K562 (cell line): ENCODE measurements at regions of chr17 and their contacts with region 1.

Region 1: GRCh38 chr17:42536048-42536371 is at the start of gene NAGLU:
- DNase-seq: peak; percentile 97 to 100 (median 99)
- ATAC-seq: peak; percentile 89
- H3K4me3 ChIP-seq: peak within 1 kb of the TSS; percentile 64
- H3K27ac ChIP-seq: peak within 1 kb of the TSS; percentile 80
- H3K4me1 ChIP-seq: peaks cover 23 to 59% of the 10 kb centered on the region in 2 experiments
- H3K27me3 ChIP-seq: no peaks in the 10 kb centered on the region
- CTCF ChIP-seq: no peak
- EP300 ChIP-seq: peak; percentile 42; the same call in 1 of the 2 replicates
- POLR2A ChIP-seq: peak; percentile 78
- RAD21 ChIP-seq: no peak
- polyA plus RNA-seq, gene NAGLU: 0.04 to 0.21 TPM

Region 2: DNA sequence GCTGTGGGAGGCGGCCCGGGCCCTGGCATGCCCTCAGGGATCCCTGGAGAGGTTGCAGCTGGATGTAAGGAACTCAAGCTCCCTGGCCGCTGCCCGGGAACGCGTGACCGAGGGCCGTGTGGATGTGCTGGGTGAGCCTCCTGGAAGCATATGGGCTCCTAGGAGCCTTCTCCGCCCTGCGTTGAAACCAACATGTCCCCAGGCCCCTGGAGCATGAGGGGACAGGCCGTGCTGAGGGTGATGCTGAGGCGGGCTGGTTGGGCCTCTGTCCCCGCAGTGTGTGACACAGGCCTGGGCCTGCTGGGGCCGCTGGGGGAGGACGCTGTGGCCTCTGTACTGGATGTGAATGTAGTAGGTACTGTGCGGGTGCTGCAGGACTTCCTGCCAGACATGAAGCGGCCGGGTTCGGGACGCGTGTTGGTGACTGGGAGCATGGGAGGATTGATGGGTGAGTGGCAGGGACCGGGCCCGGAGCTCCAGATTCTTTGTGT is 11.0 kb after region 1 on chr17:
- CTCF ChIA-PET with region 1: no interaction called
- POLR2A ChIA-PET with region 1: interaction called, 10 read pairs
- in situ Hi-C with region 1: no loop called
- intact Hi-C with region 1: no loop called
- DNase-seq: peak in 1 of 4 experiments; percentile 1
- ATAC-seq: 0 out of 3 replicates have a peak, but pooled peaks have one; percentile 6
- H3K4me3 ChIP-seq: no peak overlapping the region
- H3K27ac ChIP-seq: no peak overlapping the region
- H3K4me1 ChIP-seq: peaks cover 0 to 31% of the 10 kb centered on the region in 2 experiments; a peak in 3 of 5 replicates
- H3K27me3 ChIP-seq: no peaks in the 10 kb centered on the region
- CTCF ChIP-seq: no peak
- EP300 ChIP-seq: no peak
- POLR2A ChIP-seq: no peak
- RAD21 ChIP-seq: no peak